HepG2 (cell line): ENCODE measurements at regions of chr9 and their contacts with region 1.

Region 1: GRCh38 chr9:88651682-88652633 is 117.0 kb downstream of the NXNL2 start:
- DNase-seq: no peak
- ATAC-seq: no peak
- H3K4me3 ChIP-seq: no peak overlapping the region
- H3K27ac ChIP-seq: no peak overlapping the region
- H3K4me1 ChIP-seq: no peaks in the 10 kb centered on the region
- H3K27me3 ChIP-seq: 0 out of 5 replicates have a peak, but pooled peaks cover 0 to 3% of the 10 kb centered on the region in 2 experiments
- CTCF ChIP-seq: no peak
- EP300 ChIP-seq: no peak
- POLR2A ChIP-seq: no peak
- RAD21 ChIP-seq: no peak

Region 2: DNA sequence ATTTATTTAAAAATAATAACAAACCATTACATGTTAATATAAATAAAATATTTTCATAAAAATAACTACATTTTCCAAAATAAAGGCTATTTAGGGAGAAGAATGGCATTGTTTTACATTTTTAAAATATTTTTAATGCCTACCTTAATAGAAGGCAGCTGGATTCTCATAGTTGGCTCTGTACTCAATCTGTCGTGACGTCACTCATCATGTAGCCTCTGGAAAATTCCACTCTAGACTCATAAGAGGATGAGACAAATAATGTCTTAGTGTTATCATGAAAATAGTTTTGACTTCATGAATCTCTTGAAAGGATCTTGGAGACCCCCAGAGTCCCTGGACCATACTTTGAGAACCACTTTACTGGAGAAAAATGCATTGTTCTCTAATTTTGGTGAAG is 23.8 kb before region 1 on chr9:
- CTCF ChIA-PET with region 1: no interaction called
- POLR2A ChIA-PET with region 1: no interaction called
- in situ Hi-C with region 1: no loop called
- intact Hi-C with region 1: no loop called
- DNase-seq: no peak
- ATAC-seq: no peak
- H3K4me3 ChIP-seq: no peak overlapping the region
- H3K27ac ChIP-seq: no peak overlapping the region
- H3K4me1 ChIP-seq: no peaks in the 10 kb centered on the region
- H3K27me3 ChIP-seq: no peaks in the 10 kb centered on the region
- CTCF ChIP-seq: no peak
- EP300 ChIP-seq: no peak
- POLR2A ChIP-seq: no peak
- RAD21 ChIP-seq: no peak

Region 3: GRCh38 chr9:88757406-88758006 is 105.5 kb after region 1 on chr9:
- CTCF ChIA-PET with region 1: no interaction called
- POLR2A ChIA-PET with region 1: no interaction called
- in situ Hi-C with region 1: no loop called
- intact Hi-C with region 1: no loop called
- DNase-seq: no peak
- ATAC-seq: no peak
- H3K4me3 ChIP-seq: no peak overlapping the region
- H3K27ac ChIP-seq: no peak overlapping the region
- H3K4me1 ChIP-seq: no peaks in the 10 kb centered on the region
- H3K27me3 ChIP-seq: 0 out of 5 replicates have a peak, but pooled peaks cover 1 to 3% of the 10 kb centered on the region in 2 experiments
- CTCF ChIP-seq: no peak
- EP300 ChIP-seq: no peak
- POLR2A ChIP-seq: no peak
- RAD21 ChIP-seq: no peak

Region 4: GRCh38 chr9:88813638-88814209 is 161.8 kb after region 1 on chr9:
- CTCF ChIA-PET with region 1: no interaction called
- POLR2A ChIA-PET with region 1: no interaction called
- in situ Hi-C with region 1: no loop called
- intact Hi-C with region 1: loop called (anchors 1 kb)
- DNase-seq: peak; percentile 18
- ATAC-seq: peak; percentile 54
- H3K4me3 ChIP-seq: no peak overlapping the region
- H3K27ac ChIP-seq: no peak overlapping the region
- H3K4me1 ChIP-seq: peaks cover 14% of the 10 kb centered on the region
- H3K27me3 ChIP-seq: peaks cover 0 to 3% of the 10 kb centered on the region in 2 experiments; a peak in 1 of 5 replicates
- CTCF ChIP-seq: no peak
- EP300 ChIP-seq: peak in 1 of 2 experiments; percentile 38; a peak in 1 of 4 replicates
- POLR2A ChIP-seq: no peak
- RAD21 ChIP-seq: no peak